ENCODE measurements at regions of chr3 and their contacts with region 1.

Region 1: DNA sequence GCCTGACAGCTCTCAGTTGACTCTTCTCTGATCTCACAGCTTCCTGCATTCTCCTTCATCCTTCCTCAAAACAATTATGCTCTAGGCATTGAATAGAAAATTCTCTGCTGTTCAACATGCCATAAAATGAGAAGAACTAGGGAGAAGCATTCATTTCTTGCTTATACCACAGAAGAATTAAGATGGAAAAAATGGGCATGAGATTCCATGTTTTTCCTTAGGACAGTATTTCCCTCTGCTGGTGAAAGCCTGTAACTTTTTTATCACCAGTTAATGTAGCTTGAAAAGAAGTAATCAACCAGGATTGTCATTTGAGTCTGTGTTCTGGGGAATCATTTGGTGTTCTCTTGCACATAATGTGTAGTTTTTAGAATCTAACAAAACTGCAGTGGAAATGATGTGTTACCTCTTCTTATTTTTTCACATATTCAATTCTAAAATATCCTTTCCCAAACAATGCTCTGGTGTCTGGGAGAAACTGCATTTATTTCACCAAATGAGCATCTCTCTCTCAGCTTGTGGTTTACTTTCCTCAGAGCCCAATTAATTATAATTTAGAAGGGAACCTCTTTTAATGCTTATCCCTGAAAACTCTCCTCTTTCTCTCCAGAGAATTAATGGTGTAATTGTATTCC is 92.8 kb upstream of the DCBLD2 start:
- DNase-seq: peak in 2 of 4 experiments; percentile 7 to 23
- ATAC-seq: no peak
- H3K4me3 ChIP-seq: no peak overlapping the region
- H3K27ac ChIP-seq: no peak overlapping the region
- H3K4me1 ChIP-seq: no peaks in the 10 kb centered on the region; a peak in 1 of 5 replicates
- H3K27me3 ChIP-seq: no peaks in the 10 kb centered on the region
- CTCF ChIP-seq: peak; percentile 31 to 60 (median 38); a peak in 4 of 6 replicates
- EP300 ChIP-seq: no peak
- POLR2A ChIP-seq: no peak
- RAD21 ChIP-seq: peak; percentile 66 to 79

Region 2: GRCh38 chr3:98602078-98602678 is 392.1 kb before region 1 on chr3:
- CTCF ChIA-PET with region 1: interaction called, 4 read pairs
- POLR2A ChIA-PET with region 1: no interaction called
- in situ Hi-C with region 1: no loop called
- intact Hi-C with region 1: loop called (anchors 2 kb)
- DNase-seq: peak; percentile 22 to 57 (median 38)
- ATAC-seq: peak; percentile 90
- H3K4me3 ChIP-seq: no peak overlapping the region
- H3K27ac ChIP-seq: no peak overlapping the region
- H3K4me1 ChIP-seq: peaks cover 0 to 1% of the 10 kb centered on the region in 2 experiments; a peak in 2 of 5 replicates
- H3K27me3 ChIP-seq: no peaks in the 10 kb centered on the region
- CTCF ChIP-seq: peak; percentile 51 to 72 (median 59)
- EP300 ChIP-seq: no peak
- POLR2A ChIP-seq: no peak
- RAD21 ChIP-seq: peak; percentile 66 to 82

Region 3: GRCh38 chr3:98824256-98824655 is 170.0 kb before region 1 on chr3:
- CTCF ChIA-PET with region 1: interaction called, 5 read pairs
- POLR2A ChIA-PET with region 1: no interaction called
- in situ Hi-C with region 1: no loop called
- intact Hi-C with region 1: loop called (anchors 2 kb)
- DNase-seq: peak in 1 of 4 experiments; percentile 14
- ATAC-seq: peak; percentile 56; the same call in 2 of the 3 replicates
- H3K4me3 ChIP-seq: no peak overlapping the region
- H3K27ac ChIP-seq: no peak overlapping the region
- H3K4me1 ChIP-seq: no peaks in the 10 kb centered on the region
- H3K27me3 ChIP-seq: no peaks in the 10 kb centered on the region
- CTCF ChIP-seq: peak; percentile 29 to 48 (median 32); a peak in 3 of 6 replicates
- EP300 ChIP-seq: no peak
- POLR2A ChIP-seq: no peak
- RAD21 ChIP-seq: peak in 1 of 2 experiments; percentile 58; a peak in 2 of 4 replicates

Region 4: GRCh38 chr3:99071096-99071495 is 76.9 kb after region 1 on chr3:
- CTCF ChIA-PET with region 1: no interaction called
- POLR2A ChIA-PET with region 1: no interaction called
- in situ Hi-C with region 1: no loop called
- intact Hi-C with region 1: no loop called
- DNase-seq: no peak
- ATAC-seq: no peak
- H3K4me3 ChIP-seq: no peak overlapping the region
- H3K27ac ChIP-seq: no peak overlapping the region
- H3K4me1 ChIP-seq: no peaks in the 10 kb centered on the region
- H3K27me3 ChIP-seq: no peaks in the 10 kb centered on the region
- CTCF ChIP-seq: no peak
- EP300 ChIP-seq: no peak
- POLR2A ChIP-seq: no peak
- RAD21 ChIP-seq: no peak

Measured in K562 (cell line).